OCI-LY7 (cell line): ENCODE measurements at regions of chr1 and their contacts with region 1.

Region 1: GRCh38 chr1:58546520-58547308 is at the start of gene OMA1:
- DNase-seq: peak; percentile 95
- H3K4me3 ChIP-seq: peak within 1 kb of the TSS; percentile 83
- H3K27ac ChIP-seq: peak within 1 kb of the TSS; percentile 55
- H3K4me1 ChIP-seq: peaks cover 12% of the 10 kb centered on the region
- CTCF ChIP-seq: peak; percentile 90
- total RNA-seq, gene OMA1: 26.0 and 35.9 TPM in 2 replicates

Region 2: GRCh38 chr1:58515794-58516401 is 30.8 kb before region 1 on chr1:
- CTCF ChIA-PET with region 1: interaction called, 5 read pairs
- POLR2A ChIA-PET with region 1: interaction called, 11 read pairs
- intact Hi-C with region 1: loop called (anchors 1 kb)
- DNase-seq: peak; percentile 78
- H3K4me3 ChIP-seq: no peak overlapping the region
- H3K27ac ChIP-seq: no peak overlapping the region
- H3K4me1 ChIP-seq: no peaks in the 10 kb centered on the region
- CTCF ChIP-seq: peak; percentile 91

Region 3: GRCh38 chr1:58528518-58528917 is 18.2 kb before region 1 on chr1:
- CTCF ChIA-PET with region 1: no interaction called
- POLR2A ChIA-PET with region 1: interaction called, 18 read pairs
- intact Hi-C with region 1: no loop called
- DNase-seq: no peak
- H3K4me3 ChIP-seq: no peak overlapping the region
- H3K27ac ChIP-seq: no peak overlapping the region
- H3K4me1 ChIP-seq: peaks cover 40% of the 10 kb centered on the region
- CTCF ChIP-seq: no peak

Region 4: GRCh38 chr1:58652651-58653184 is 106.0 kb after region 1 on chr1:
- CTCF ChIA-PET with region 1: no interaction called
- POLR2A ChIA-PET with region 1: interaction called, 4 read pairs
- intact Hi-C with region 1: loop called (anchors 10 kb)
- DNase-seq: peak; percentile 78
- H3K4me3 ChIP-seq: no peak overlapping the region
- H3K27ac ChIP-seq: no peak overlapping the region
- H3K4me1 ChIP-seq: peaks cover 9% of the 10 kb centered on the region
- CTCF ChIP-seq: peak; percentile 95

Region 5: GRCh38 chr1:58699011-58699762 is 152.5 kb after region 1 on chr1:
- CTCF ChIA-PET with region 1: no interaction called
- POLR2A ChIA-PET with region 1: interaction called, 3 read pairs
- intact Hi-C with region 1: loop called (anchors 5 kb)
- DNase-seq: no peak
- H3K4me3 ChIP-seq: peak overlapping the region; percentile 100
- H3K27ac ChIP-seq: peak overlapping the region; percentile 51
- H3K4me1 ChIP-seq: peaks cover 8% of the 10 kb centered on the region
- CTCF ChIP-seq: no peak